Ascending aorta (tissue), 2 donors: ENCODE measurements at regions of chr11 and their contacts with region 1.

Region 1: GRCh38 chr11:47766305-47767227 is 575 bp downstream of the FNBP4 start:
- DNase-seq: peak in 1 of 2 donors; percentile 83
- H3K4me3 ChIP-seq: peak overlapping the region; percentile 80 to 87
- H3K27ac ChIP-seq: peak overlapping the region; percentile 96 to 99
- H3K4me1 ChIP-seq: peaks cover 0 to 15% of the 10 kb centered on the region in 2 donors
- H3K27me3 ChIP-seq: no peaks in the 10 kb centered on the region
- CTCF ChIP-seq: no peak

Region 2: DNA sequence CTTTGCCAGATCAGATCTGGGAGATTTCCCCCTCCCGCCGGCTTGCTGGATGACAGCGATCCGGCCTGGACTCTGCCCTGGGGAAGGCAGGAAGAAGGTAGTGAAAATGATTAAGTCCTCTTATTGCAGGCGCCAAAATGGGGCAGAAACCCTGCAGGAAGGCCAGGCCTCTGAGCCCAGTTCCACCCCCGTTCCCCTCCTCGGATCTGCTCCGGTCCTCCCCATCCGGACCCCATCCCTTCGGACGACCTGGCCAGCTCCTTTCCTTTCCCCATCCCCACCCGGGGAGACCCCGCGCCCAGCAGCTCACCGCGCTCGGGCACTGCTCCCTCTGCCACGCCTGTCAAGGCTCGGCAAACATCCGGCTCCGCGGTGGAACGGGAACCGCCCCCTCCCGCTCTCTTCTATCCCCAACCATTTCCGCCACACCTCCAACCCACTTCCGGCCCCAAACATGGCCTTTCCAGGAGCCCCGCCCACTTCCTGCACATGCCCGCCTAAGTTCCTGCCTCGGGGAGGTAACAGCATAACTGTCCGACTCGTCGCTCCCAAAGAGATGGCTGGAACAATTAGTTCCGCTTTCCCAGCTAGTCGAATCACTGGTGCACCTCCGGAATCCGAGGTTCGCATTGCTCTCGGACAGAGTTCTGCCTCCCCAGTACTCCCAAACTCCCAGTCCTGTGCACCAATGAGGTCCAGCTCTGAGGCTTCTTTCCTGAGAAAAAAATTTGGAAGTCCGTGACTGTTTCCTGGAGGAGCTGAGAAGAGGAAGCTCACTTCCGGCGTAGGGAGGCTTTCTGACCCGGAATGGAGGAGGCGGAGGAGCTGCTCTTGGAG is 1066.1 kb before region 1 on chr11 and contains the starts of genes ARHGAP1 and ZNF408:
- intact Hi-C with region 1: loop called (anchors 2 kb)
- DNase-seq: peak; percentile 96 to 100
- H3K4me3 ChIP-seq: peak within 1 kb of the TSS; percentile 79 to 82
- H3K27ac ChIP-seq: peak within 1 kb of the TSS; percentile 85 to 91
- H3K4me1 ChIP-seq: peaks cover 33 to 51% of the 10 kb centered on the region in 2 donors
- H3K27me3 ChIP-seq: no peaks in the 10 kb centered on the region
- CTCF ChIP-seq: no peak
- total RNA-seq, gene ARHGAP1: 104 TPM
- total RNA-seq, gene ZNF408: 9.7 TPM

Region 3: DNA sequence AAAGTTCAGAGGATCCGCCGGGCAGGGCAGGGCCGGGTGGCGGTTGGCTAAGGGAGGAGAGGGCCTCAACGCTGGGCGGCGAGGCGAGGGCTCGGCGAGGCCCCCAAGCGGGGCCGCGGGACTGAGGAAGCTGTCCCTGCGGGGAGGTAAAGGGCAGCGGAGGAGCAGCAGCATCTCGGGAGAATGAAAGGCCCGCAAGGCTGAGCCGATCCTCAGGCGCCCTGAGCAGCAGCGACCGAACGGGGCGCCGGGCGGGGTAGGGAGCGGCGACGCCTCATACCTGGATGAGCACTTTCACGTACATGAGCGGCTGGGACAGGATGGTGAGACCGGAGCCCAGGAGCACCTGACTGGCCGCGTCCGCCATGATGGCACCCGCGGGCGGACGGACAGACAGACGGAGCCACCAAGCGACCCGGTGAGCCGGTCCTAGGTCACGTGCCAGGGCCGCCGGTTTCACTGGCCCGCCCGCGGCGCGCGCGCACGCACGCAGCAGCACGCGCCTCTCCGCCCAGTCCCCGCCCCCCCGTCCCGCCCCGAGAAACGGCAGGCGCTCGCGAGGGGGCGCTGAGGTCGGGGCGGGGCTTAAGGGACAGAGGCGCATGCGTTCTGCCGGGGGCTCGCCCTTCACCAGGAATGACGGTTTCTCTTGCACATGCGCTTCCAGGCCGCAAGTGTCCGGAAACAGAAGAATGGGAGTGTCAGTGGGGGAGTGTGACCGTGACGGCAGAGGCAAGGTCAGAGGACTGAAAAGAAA is 124.3 kb before region 1 on chr11 and contains the start of gene MTCH2:
- intact Hi-C with region 1: loop called (anchors 1 kb)
- DNase-seq: peak; percentile 86 to 97
- H3K4me3 ChIP-seq: peak within 1 kb of the TSS; percentile 69 to 77
- H3K27ac ChIP-seq: peak within 1 kb of the TSS; percentile 85 to 94
- H3K4me1 ChIP-seq: peaks cover 2 to 13% of the 10 kb centered on the region in 2 donors
- H3K27me3 ChIP-seq: no peaks in the 10 kb centered on the region
- CTCF ChIP-seq: peak in 1 of 3 experiments; percentile 35
- total RNA-seq, gene MTCH2: 55.9 TPM

Region 4: GRCh38 chr11:47847892-47848635 is 81.5 kb after region 1 on chr11 and contains the start of gene NUP160:
- intact Hi-C with region 1: loop called (anchors 5 kb)
- DNase-seq: peak; percentile 32 to 92
- H3K4me3 ChIP-seq: peak within 1 kb of the TSS; percentile 80 to 91
- H3K27ac ChIP-seq: peak within 1 kb of the TSS; percentile 87 to 96
- H3K4me1 ChIP-seq: peaks cover 4 to 11% of the 10 kb centered on the region in 2 donors
- H3K27me3 ChIP-seq: no peaks in the 10 kb centered on the region
- CTCF ChIP-seq: no peak
- total RNA-seq, gene NUP160: 14.0 TPM

Region 5: DNA sequence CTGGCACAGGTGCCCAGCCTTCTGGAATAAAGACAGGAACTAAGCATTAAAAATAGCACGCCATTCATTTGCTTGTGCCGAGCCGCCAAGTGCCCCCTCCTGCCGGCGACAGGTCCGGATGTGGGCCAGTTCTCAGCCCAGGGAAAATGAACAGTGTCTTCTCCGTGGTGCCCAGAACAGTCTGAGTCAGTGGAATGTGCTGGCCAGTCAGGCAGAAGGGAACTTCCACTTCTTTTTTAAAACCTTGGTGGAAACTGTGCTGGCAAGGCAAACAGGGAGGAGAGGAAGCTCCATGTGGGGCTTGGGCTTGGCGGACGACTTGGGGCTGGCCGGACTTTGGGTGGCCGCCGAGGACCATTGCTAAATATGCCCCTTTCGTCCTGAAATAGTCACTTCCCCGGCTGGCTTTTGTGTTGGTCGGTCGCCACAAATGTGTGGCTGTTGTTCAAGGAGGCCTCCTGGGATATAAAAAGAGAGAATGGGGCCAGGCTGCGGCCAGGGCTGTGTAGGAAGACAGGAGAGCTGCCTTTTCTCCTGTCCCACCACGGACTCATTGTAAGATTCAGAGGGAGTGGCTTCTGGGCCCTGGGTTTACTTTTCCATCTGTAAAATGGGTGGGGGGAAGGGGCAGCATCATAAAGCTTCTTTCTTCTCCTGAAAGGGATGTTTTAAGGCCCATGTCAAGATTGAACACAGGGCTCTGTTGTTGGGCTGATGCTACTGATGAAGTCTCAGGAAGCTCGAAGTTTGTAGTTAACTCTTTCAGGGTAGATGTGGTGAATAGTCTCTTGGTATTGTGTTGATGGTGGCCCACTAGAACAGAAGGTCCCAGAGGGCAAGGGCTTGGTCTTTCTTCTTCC is 314.8 kb after region 1 on chr11:
- intact Hi-C with region 1: loop called (anchors 10 kb)
- DNase-seq: peak; percentile 74 to 95
- H3K4me3 ChIP-seq: no peak overlapping the region
- H3K27ac ChIP-seq: peak overlapping the region; percentile 64 to 78
- H3K4me1 ChIP-seq: peaks cover 0 to 15% of the 10 kb centered on the region in 2 donors
- H3K27me3 ChIP-seq: no peaks in the 10 kb centered on the region
- CTCF ChIP-seq: no peak